SK-N-SH (cell line): ENCODE measurements at regions of chr10 and their contacts with region 1.

Region 1: GRCh38 chr10:97553575-97554031 is 19.0 kb upstream of the ANKRD2 start:
- DNase-seq: peak; percentile 80
- H3K4me3 ChIP-seq: no peak overlapping the region; a peak in 1 of 4 replicates
- H3K27ac ChIP-seq: no peak overlapping the region
- H3K4me1 ChIP-seq: peaks cover 12 to 23% of the 10 kb centered on the region in 2 experiments; a peak in 3 of 4 replicates
- H3K27me3 ChIP-seq: no peaks in the 10 kb centered on the region
- CTCF ChIP-seq: peak; percentile 91
- EP300 ChIP-seq: no peak
- RAD21 ChIP-seq: peak; percentile 91

Region 2: GRCh38 chr10:95987685-95988426 is 1565.7 kb before region 1 on chr10:
- CTCF ChIA-PET with region 1: no interaction called
- POLR2A ChIA-PET with region 1: no interaction called
- DNase-seq: no peak
- H3K4me3 ChIP-seq: no peak overlapping the region
- H3K27ac ChIP-seq: no peak overlapping the region
- H3K4me1 ChIP-seq: no peaks in the 10 kb centered on the region
- H3K27me3 ChIP-seq: no peaks in the 10 kb centered on the region
- CTCF ChIP-seq: no peak
- EP300 ChIP-seq: no peak
- RAD21 ChIP-seq: no peak

Region 3: GRCh38 chr10:97454330-97455036 is 99.1 kb before region 1 on chr10:
- CTCF ChIA-PET with region 1: interaction called, 10 read pairs
- POLR2A ChIA-PET with region 1: interaction called, 3 read pairs
- DNase-seq: no peak
- H3K4me3 ChIP-seq: no peak overlapping the region
- H3K27ac ChIP-seq: no peak overlapping the region; a peak in 1 of 4 replicates
- H3K4me1 ChIP-seq: no peaks in the 10 kb centered on the region; a peak in 1 of 4 replicates
- H3K27me3 ChIP-seq: no peaks in the 10 kb centered on the region
- CTCF ChIP-seq: no peak
- EP300 ChIP-seq: no peak
- RAD21 ChIP-seq: no peak

Region 4: DNA sequence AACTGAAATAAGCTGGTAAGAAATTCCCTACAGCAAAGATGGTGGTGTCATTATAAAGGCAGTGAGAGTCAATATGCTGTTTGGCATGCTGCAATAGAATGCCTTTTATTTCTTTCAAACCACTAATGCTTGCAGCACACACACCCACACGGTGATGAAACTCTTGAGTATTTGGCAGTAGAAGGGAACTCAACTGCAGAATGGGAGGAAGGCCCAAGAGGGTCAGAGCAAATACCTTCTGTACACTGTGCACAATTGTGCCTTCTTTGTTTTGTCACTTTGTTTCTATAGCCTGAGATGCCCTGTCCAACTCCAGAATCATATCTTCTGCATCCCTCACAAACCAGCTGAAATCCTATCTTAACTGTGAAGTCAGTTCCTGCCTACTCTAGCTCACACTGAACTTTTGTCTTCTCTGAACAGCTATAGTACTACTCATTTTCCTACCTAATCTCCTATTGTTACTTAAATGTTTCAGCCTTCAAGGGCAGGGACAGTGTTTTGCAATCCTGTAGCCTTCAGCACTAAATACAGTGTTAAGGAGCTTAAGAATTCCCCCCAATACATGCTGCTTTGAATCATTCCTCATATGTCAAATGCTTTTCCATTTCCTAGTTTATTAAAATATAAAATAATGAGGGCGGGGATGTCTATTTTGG is 77.5 kb before region 1 on chr10:
- CTCF ChIA-PET with region 1: interaction called, 11 read pairs
- POLR2A ChIA-PET with region 1: no interaction called
- DNase-seq: no peak
- H3K4me3 ChIP-seq: no peak overlapping the region
- H3K27ac ChIP-seq: no peak overlapping the region
- H3K4me1 ChIP-seq: no peaks in the 10 kb centered on the region; a peak in 1 of 4 replicates
- H3K27me3 ChIP-seq: no peaks in the 10 kb centered on the region
- CTCF ChIP-seq: no peak
- EP300 ChIP-seq: no peak
- RAD21 ChIP-seq: no peak

Region 5: GRCh38 chr10:97520978-97521761 is 32.4 kb before region 1 on chr10:
- CTCF ChIA-PET with region 1: interaction called, 10 read pairs
- POLR2A ChIA-PET with region 1: no interaction called
- DNase-seq: no peak
- H3K4me3 ChIP-seq: no peak overlapping the region
- H3K27ac ChIP-seq: no peak overlapping the region
- H3K4me1 ChIP-seq: peaks cover 12 to 37% of the 10 kb centered on the region in 2 experiments
- H3K27me3 ChIP-seq: no peaks in the 10 kb centered on the region
- CTCF ChIP-seq: no peak
- EP300 ChIP-seq: no peak
- RAD21 ChIP-seq: no peak

Region 6: GRCh38 chr10:97543025-97543575 is 10.5 kb before region 1 on chr10:
- CTCF ChIA-PET with region 1: interaction called, 61 read pairs
- POLR2A ChIA-PET with region 1: no interaction called
- DNase-seq: no peak
- H3K4me3 ChIP-seq: no peak overlapping the region
- H3K27ac ChIP-seq: peak overlapping the region; percentile 77 to 100
- H3K4me1 ChIP-seq: peaks cover 19 to 56% of the 10 kb centered on the region in 2 experiments; a peak in 3 of 4 replicates
- H3K27me3 ChIP-seq: no peaks in the 10 kb centered on the region
- CTCF ChIP-seq: no peak
- EP300 ChIP-seq: peak in 1 of 2 experiments; percentile 90; a peak in 1 of 4 replicates
- RAD21 ChIP-seq: no peak